ENCODE measurements at regions of chr13 and their contacts with region 1.

Region 1: DNA sequence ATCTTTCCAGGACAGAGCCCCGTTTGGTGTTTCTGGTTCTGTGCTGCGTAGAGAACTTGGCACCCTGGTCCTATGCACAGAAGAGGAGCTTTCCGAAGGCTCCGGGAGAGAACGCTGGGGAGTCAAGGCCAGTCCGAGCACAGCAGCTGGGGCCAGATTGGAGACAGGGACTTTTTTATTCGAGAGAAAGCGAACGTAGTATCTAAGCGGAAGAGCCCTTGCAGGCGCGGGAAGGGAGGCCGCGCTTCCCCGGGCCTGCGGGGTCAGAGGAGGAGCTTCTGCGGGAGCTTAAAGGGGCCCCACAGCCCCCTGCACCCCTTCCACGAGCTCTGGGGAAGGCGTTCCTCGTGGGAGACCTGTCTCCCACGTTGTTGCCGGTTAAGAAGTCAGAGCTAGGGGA is 48.6 kb upstream of the ARHGEF7 start:
- DNase-seq: no peak
- H3K4me3 ChIP-seq: no peak overlapping the region
- H3K27ac ChIP-seq: no peak overlapping the region
- H3K4me1 ChIP-seq: peaks cover 6% of the 10 kb centered on the region
- H3K27me3 ChIP-seq: no peaks in the 10 kb centered on the region
- CTCF ChIP-seq: no peak

Region 2: DNA sequence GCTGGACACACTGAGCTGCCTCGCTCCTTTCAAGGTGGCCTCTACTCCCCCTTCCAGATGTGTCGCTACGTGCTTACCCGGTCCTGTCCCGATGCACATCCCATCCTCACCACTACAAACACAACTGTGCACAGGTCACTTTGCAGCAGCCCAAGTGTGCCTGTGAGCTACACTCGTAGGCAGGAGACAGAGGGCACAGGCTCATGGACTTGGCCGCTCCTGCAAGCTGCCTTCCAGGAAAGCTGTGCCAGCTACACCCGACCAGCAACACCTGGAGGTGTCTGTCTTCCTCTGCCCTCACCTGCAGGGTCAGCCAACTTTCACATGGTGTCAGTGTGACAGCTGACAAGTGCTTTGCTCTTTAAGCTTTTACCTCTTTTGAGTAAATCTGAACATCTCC is 376.0 kb before region 1 on chr13:
- CTCF ChIA-PET with region 1: no interaction called
- dilution Hi-C with region 1: no loop called
- in situ Hi-C with region 1: no loop called
- intact Hi-C with region 1: no loop called
- DNase-seq: no peak
- H3K4me3 ChIP-seq: no peak overlapping the region
- H3K27ac ChIP-seq: no peak overlapping the region
- H3K4me1 ChIP-seq: no peaks in the 10 kb centered on the region
- H3K27me3 ChIP-seq: no peaks in the 10 kb centered on the region
- CTCF ChIP-seq: no peak

Region 3: GRCh38 chr13:110874508-110874960 is 192.0 kb before region 1 on chr13:
- CTCF ChIA-PET with region 1: no interaction called
- dilution Hi-C with region 1: no loop called
- in situ Hi-C with region 1: no loop called
- intact Hi-C with region 1: no loop called
- DNase-seq: peak; percentile 64
- H3K4me3 ChIP-seq: peak overlapping the region in 2 of 3 experiments; percentile 11 to 21
- H3K27ac ChIP-seq: no peak overlapping the region
- H3K4me1 ChIP-seq: peaks cover 14% of the 10 kb centered on the region
- H3K27me3 ChIP-seq: no peaks in the 10 kb centered on the region
- CTCF ChIP-seq: no peak

Region 4: DNA sequence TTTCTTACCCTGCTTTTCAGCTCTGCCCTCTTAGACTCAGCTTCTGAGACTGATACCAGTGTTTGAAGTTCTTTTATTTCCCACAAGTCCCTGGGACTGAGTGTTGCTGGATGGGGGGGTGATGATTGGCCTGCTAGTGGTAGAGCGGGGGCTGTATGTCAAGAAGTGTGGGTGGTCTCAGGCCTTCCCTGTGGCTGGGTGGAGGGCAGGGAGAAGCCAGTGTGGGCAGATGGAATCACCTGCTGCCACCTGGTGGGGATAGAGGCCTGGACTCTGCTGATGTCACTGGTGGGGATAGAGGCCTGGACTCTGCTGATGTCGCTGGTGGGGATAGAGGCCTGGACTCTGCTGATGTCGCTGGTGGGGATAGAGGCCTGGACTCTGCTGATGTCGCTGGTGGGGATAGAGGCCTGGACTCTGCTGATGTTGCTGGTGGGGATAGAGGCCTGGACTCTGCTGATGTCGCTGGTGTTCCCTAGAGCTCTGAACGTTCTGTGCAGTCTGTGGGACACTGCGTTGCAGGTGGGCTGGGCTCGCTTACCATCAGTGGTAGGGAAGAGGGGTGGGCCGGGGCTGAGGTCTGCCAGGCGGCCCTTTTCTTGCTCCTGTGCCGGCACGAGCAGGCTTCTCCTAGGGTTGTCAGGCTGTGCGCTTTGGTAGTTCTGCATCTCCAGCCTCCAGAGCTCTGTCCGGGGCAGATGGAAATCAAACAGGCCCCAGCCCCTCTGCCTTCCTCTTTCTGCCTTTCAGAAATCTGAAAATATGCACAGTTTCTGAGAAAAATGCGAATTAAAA is 149.8 kb after region 1 on chr13:
- CTCF ChIA-PET with region 1: interaction called, 4 read pairs
- dilution Hi-C with region 1: no loop called
- in situ Hi-C with region 1: loop called (anchors 10 kb)
- intact Hi-C with region 1: loop called (anchors 1 kb)
- DNase-seq: no peak
- H3K4me3 ChIP-seq: no peak overlapping the region
- H3K27ac ChIP-seq: no peak overlapping the region
- H3K4me1 ChIP-seq: no peaks in the 10 kb centered on the region
- H3K27me3 ChIP-seq: no peaks in the 10 kb centered on the region
- CTCF ChIP-seq: peak; percentile 36 to 64

Region 5: GRCh38 chr13:111460548-111461444 is 394.3 kb after region 1 on chr13:
- CTCF ChIA-PET with region 1: interaction called, 17 read pairs
- dilution Hi-C with region 1: no loop called
- in situ Hi-C with region 1: no loop called
- intact Hi-C with region 1: no loop called
- DNase-seq: peak; percentile 19
- H3K4me3 ChIP-seq: no peak overlapping the region
- H3K27ac ChIP-seq: no peak overlapping the region
- H3K4me1 ChIP-seq: no peaks in the 10 kb centered on the region
- H3K27me3 ChIP-seq: no peaks in the 10 kb centered on the region
- CTCF ChIP-seq: peak; percentile 10 to 31

Region 6: DNA sequence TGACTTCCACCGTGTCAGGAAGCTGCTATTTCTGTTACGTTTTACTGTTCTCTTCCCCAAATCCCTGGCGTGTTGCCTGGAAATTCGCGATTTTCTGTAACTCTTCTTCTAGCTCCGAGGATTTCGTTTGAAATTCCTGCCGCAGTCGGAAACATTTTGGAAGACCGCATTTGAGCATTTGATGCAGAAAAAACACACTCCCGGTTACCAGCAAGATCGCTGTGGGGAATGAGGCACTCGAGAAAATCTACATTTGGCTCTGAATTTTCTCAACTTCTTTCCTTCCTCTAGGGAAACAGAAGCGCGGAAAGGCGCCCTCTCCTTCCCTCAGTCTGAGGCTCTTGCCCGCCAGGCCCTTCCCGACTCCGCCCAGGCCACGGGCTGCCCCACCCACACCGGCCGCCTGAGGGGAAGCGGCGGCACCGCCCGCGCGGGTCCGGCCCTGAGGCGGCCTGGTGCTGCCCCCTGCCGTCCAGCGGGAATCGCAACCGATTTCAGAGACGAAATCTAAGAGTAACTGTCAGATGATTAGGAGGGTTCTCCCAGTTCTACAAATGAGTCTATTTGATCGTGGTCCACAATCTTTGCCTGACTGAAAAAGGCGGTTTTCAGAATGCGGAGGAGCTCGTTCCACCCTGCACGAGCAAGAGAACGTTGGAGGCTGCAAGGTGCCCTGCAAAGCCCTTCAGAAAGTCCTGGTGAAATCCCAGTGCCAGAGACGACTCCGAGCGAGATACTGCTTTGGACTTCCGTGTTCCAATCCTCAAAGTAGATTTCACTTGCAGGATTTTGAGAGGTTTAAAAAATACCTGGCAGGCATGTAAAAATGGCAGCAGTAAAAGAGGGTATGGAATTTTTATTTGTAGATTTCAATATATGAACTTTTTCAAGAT is 1539.8 kb after region 1 on chr13:
- CTCF ChIA-PET with region 1: no interaction called
- dilution Hi-C with region 1: no loop called
- in situ Hi-C with region 1: no loop called
- intact Hi-C with region 1: loop called (anchors 10 kb)
- DNase-seq: peak; percentile 80
- H3K4me3 ChIP-seq: peak overlapping the region; percentile 52 to 70 (median 55)
- H3K27ac ChIP-seq: no peak overlapping the region
- H3K4me1 ChIP-seq: peaks cover 4% of the 10 kb centered on the region
- H3K27me3 ChIP-seq: no peaks in the 10 kb centered on the region
- CTCF ChIP-seq: peak; percentile 69 to 88

Measured in mammary epithelial cell (primary cell).